ENCODE measurements at regions of chrX and their contacts with region 1.

Region 1: DNA sequence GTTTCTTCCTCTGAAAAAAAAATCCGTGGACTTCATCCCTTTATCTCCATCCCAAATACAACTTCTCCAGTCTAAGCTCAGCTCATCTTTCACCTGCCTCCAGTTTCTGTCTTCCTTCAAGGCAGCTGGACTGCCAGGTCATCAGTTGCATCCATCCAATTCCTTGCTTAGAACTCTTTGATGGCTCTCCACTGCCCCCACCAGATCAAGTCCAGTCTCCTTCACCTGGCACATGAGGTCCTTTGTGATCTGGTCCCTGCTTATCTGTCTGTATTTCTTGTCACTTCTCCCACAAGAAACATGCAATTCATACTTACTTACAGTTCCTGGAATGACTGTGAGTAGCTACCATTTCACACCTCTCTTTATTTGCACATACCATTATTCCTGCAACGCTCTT is 33.8 kb downstream of the OTUD6A start:
- DNase-seq: no peak
- ATAC-seq: peak in 1 of 4 donors; percentile 46
- H3K4me3 ChIP-seq: no peak overlapping the region
- H3K27ac ChIP-seq: no peak overlapping the region
- H3K4me1 ChIP-seq: no peaks in the 10 kb centered on the region
- H3K27me3 ChIP-seq: peaks cover 0 to 7% (median 0%) of the 10 kb centered on the region in 4 donors
- CTCF ChIP-seq: no peak

Region 2: GRCh38 chrX:69493193-69493592 is 602.9 kb before region 1 on chrX:
- intact Hi-C with region 1: loop called in 1 of 3 experiments (anchors 10 kb)
- DNase-seq: peak in 3 of 6 donors; percentile 14 to 63 (median 30)
- ATAC-seq: peak; percentile 64 to 87 (median 87)
- H3K4me3 ChIP-seq: no peak overlapping the region
- H3K27ac ChIP-seq: no peak overlapping the region
- H3K4me1 ChIP-seq: no peaks in the 10 kb centered on the region
- H3K27me3 ChIP-seq: peaks cover 0 to 34% (median 7%) of the 10 kb centered on the region in 4 donors
- CTCF ChIP-seq: peak; percentile 19 to 44 (median 34)

Region 3: GRCh38 chrX:69932323-69932722 is 163.7 kb before region 1 on chrX:
- intact Hi-C with region 1: no loop called
- DNase-seq: no peak
- ATAC-seq: no peak
- H3K4me3 ChIP-seq: no peak overlapping the region
- H3K27ac ChIP-seq: no peak overlapping the region
- H3K4me1 ChIP-seq: no peaks in the 10 kb centered on the region
- H3K27me3 ChIP-seq: peaks cover 0 to 14% (median 0%) of the 10 kb centered on the region in 4 donors
- CTCF ChIP-seq: no peak

Region 4: DNA sequence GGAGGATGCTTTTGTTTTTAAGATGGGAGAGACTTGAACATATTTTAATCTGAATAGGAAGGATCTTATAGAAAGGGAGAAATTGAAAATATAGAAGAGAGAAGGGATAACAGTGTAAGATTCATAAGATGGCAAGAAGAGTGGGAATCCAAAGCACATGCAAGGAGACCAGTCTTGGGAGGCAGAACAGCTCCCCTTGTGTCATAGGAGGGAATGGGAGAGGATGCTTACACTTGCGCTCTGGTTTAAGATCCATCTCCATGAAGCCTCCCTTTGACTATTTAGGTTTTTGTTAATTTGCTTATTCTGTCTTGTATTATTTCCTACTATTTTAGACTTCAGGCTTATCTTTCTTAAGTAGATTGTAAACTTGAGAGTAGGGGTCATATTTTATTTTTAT is 236.5 kb after region 1 on chrX:
- intact Hi-C with region 1: no loop called
- DNase-seq: no peak
- ATAC-seq: no peak
- H3K4me3 ChIP-seq: no peak overlapping the region
- H3K27ac ChIP-seq: no peak overlapping the region
- H3K4me1 ChIP-seq: no peaks in the 10 kb centered on the region
- H3K27me3 ChIP-seq: peaks cover 0 to 5% (median 0%) of the 10 kb centered on the region in 4 donors
- CTCF ChIP-seq: no peak